ENCODE measurements at regions of chr19 and their contacts with region 1.

Region 1: GRCh38 chr19:15177269-15178116 is 23.3 kb downstream of the NOTCH3 start:
- DNase-seq: peak; percentile 86 to 94 (median 93)
- H3K4me3 ChIP-seq: peak overlapping the region in 4 of 7 experiments; percentile 48 to 64 (median 57)
- H3K27ac ChIP-seq: no peak overlapping the region
- H3K4me1 ChIP-seq: peaks cover 0 to 15% (median 8%) of the 10 kb centered on the region in 4 experiments
- H3K27me3 ChIP-seq: peaks cover 0 to 10% (median 4%) of the 10 kb centered on the region in 5 experiments

Region 2: GRCh38 chr19:15144036-15144646 is 33.4 kb before region 1 on chr19:
- CTCF ChIA-PET with region 1: no interaction called
- POLR2A ChIA-PET with region 1: no interaction called
- DNase-seq: no peak
- H3K4me3 ChIP-seq: no peak overlapping the region
- H3K27ac ChIP-seq: no peak overlapping the region
- H3K4me1 ChIP-seq: no peaks in the 10 kb centered on the region
- H3K27me3 ChIP-seq: no peaks in the 10 kb centered on the region

Region 3: DNA sequence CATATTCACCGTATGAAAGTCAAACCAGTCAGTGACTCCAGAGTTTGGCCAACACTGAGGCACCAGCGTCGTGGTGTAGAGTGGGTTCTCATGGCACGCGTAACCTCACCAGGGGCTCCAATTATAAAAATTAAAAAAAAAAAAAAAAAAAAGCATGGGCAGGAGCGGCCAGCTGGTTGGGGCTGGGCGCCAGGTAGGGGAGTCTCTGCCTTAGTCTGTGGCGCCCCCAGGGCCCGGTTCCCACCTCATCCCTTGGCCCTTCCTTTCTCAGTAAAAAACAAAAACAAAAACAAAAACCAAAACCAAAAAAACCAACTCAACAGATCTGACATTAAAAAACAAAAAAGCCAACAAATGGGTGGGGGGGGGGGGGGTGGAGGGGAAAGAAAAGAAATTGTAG is 59.4 kb after region 1 on chr19:
- CTCF ChIA-PET with region 1: no interaction called
- POLR2A ChIA-PET with region 1: no interaction called
- DNase-seq: no peak
- H3K4me3 ChIP-seq: no peak overlapping the region
- H3K27ac ChIP-seq: no peak overlapping the region
- H3K4me1 ChIP-seq: peaks cover 0 to 14% (median 8%) of the 10 kb centered on the region in 4 experiments
- H3K27me3 ChIP-seq: peaks cover 0 to 20% (median 3%) of the 10 kb centered on the region in 5 experiments

Region 4: GRCh38 chr19:15251749-15252397 is 74.4 kb after region 1 on chr19:
- CTCF ChIA-PET with region 1: interaction called, 11 read pairs
- POLR2A ChIA-PET with region 1: no interaction called
- DNase-seq: no peak
- H3K4me3 ChIP-seq: no peak overlapping the region
- H3K27ac ChIP-seq: no peak overlapping the region
- H3K4me1 ChIP-seq: no peaks in the 10 kb centered on the region
- H3K27me3 ChIP-seq: no peaks in the 10 kb centered on the region

Region 5: GRCh38 chr19:15260939-15261338 is 83.4 kb after region 1 on chr19:
- CTCF ChIA-PET with region 1: interaction called, 21 read pairs
- POLR2A ChIA-PET with region 1: no interaction called
- DNase-seq: peak; percentile 29 to 45 (median 45)
- H3K4me3 ChIP-seq: no peak overlapping the region
- H3K27ac ChIP-seq: no peak overlapping the region
- H3K4me1 ChIP-seq: no peaks in the 10 kb centered on the region
- H3K27me3 ChIP-seq: no peaks in the 10 kb centered on the region

Region 6: GRCh38 chr19:15488489-15489224 is 311.2 kb after region 1 on chr19:
- CTCF ChIA-PET with region 1: no interaction called
- POLR2A ChIA-PET with region 1: no interaction called
- DNase-seq: no peak
- H3K4me3 ChIP-seq: no peak overlapping the region
- H3K27ac ChIP-seq: no peak overlapping the region
- H3K4me1 ChIP-seq: no peaks in the 10 kb centered on the region
- H3K27me3 ChIP-seq: no peaks in the 10 kb centered on the region